PC-9 (cell line): ENCODE measurements at regions of chr15 and their contacts with region 1.

Region 1: GRCh38 chr15:65924004-65924403 is 54.7 kb downstream of the RAB11A start:
- DNase-seq: no peak
- H3K4me3 ChIP-seq: no peak overlapping the region
- H3K27ac ChIP-seq: no peak overlapping the region
- H3K4me1 ChIP-seq: no peaks in the 10 kb centered on the region
- H3K27me3 ChIP-seq: no peaks in the 10 kb centered on the region
- CTCF ChIP-seq: no peak

Region 2: DNA sequence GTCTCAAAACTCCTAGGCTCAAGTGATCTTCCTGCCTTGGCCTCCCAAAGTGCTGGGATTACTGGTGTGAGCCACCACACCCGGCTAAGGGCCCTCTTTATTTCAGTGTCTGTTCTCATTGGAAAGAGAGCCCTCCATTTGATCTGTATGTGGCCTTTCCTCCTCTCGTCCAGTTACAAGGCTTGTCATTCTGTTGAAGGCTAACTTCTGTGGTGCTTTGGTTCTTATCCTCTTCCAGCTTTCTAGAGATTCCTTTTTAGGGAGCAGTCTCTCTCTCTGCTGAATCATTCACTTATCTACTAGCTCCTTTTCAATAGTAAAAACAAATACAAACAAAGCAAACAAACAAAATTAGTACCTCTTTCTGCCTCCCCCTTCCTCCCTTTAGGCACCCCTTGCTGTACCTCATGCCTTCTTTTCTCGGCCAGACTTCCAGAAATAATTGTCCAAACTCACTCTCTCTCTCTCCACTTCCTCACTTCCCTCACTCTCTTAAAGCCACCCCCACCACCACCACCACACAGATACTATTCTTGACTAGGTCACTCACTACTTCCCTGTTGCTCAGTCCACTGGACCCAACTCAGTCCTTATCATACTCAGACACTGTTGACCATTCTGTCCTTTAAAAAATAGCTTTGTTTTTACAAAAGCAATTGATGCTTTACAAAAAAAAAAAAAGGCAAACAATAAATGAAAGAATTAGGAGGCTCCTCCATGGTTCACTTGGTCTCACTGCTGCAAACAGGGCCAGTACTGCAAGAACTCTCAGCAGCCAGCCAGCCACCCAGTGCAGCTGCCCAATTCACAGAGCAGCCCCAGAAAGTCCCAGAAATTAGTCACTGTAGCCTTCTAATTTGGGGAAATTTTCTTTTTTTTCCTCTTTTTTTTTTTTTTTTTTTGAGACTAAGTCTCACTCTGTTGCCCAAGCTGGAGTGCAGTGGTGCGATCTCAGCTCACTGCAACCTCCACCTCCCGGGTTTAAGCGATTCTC is 86.4 kb before region 1 on chr15:
- CTCF ChIA-PET with region 1: no interaction called
- POLR2A ChIA-PET with region 1: no interaction called
- intact Hi-C with region 1: no loop called
- DNase-seq: no peak
- H3K4me3 ChIP-seq: no peak overlapping the region
- H3K27ac ChIP-seq: no peak overlapping the region
- H3K4me1 ChIP-seq: peaks cover 16% of the 10 kb centered on the region
- H3K27me3 ChIP-seq: no peaks in the 10 kb centered on the region
- CTCF ChIP-seq: no peak

Region 3: GRCh38 chr15:65909831-65910230 is 14.2 kb before region 1 on chr15:
- CTCF ChIA-PET with region 1: no interaction called
- POLR2A ChIA-PET with region 1: no interaction called
- intact Hi-C with region 1: no loop called
- DNase-seq: no peak
- H3K4me3 ChIP-seq: no peak overlapping the region
- H3K27ac ChIP-seq: no peak overlapping the region
- H3K4me1 ChIP-seq: peaks cover 30% of the 10 kb centered on the region
- H3K27me3 ChIP-seq: no peaks in the 10 kb centered on the region
- CTCF ChIP-seq: no peak

Region 4: DNA sequence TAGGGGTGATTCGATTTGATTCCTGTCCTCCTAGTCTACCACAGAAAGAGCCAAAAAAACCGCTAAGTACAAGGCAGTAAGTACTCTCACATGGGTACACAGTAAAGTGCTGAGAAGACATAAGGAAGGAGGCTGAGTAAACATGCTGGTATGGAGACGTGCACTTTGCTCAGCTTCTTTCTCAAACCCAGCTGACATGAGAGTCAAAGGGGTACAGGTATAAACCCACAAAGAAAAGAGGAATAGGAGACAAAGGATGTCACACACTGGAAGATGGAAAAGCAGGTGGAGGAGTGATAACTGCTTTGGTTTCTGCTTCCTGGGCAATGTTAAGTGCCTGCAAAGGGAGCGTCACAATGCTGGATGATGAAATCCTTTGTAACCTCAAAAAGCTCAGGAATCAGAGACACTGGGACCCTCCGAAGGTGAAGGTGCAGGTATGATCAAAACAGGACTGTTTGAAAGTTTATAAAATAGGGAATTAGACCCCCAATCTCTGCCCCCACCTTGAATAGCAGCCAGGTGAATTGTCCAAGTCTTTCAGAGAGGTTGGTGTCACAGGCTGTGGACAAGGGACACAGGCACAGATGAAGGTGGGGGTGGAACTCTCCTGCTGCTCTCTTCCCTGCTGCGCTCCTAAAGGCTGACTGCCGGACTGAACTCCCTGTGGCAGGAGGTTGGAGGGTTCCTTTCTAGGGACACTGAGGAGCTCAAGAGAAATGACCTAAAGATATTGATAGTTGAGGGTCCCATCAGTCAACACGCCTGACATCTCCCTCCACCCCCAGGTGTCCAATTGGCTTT is 47.1 kb after region 1 on chr15:
- CTCF ChIA-PET with region 1: interaction called, 20 read pairs
- POLR2A ChIA-PET with region 1: no interaction called
- intact Hi-C with region 1: no loop called
- DNase-seq: no peak
- H3K4me3 ChIP-seq: no peak overlapping the region
- H3K27ac ChIP-seq: no peak overlapping the region
- H3K4me1 ChIP-seq: no peaks in the 10 kb centered on the region
- H3K27me3 ChIP-seq: no peaks in the 10 kb centered on the region
- CTCF ChIP-seq: no peak

Region 5: GRCh38 chr15:66269326-66270038 is 345.5 kb after region 1 on chr15:
- CTCF ChIA-PET with region 1: no interaction called
- POLR2A ChIA-PET with region 1: no interaction called
- intact Hi-C with region 1: no loop called
- DNase-seq: peak; percentile 50 to 71
- H3K4me3 ChIP-seq: no peak overlapping the region
- H3K27ac ChIP-seq: no peak overlapping the region
- H3K4me1 ChIP-seq: peaks cover 6% of the 10 kb centered on the region; the same call in 1 of the 2 replicates
- H3K27me3 ChIP-seq: no peaks in the 10 kb centered on the region
- CTCF ChIP-seq: no peak